ENCODE measurements at regions of chr6 and their contacts with region 1.

Region 1: GRCh38 chr6:116969211-116969863 is 92.3 kb downstream of the RFX6 start:
- DNase-seq: peak in 1 of 2 experiments; percentile 60
- H3K4me3 ChIP-seq: no peak overlapping the region
- H3K4me3 Mint-ChIP-seq: no peak overlapping the region
- H3K27ac Mint-ChIP-seq: no peak overlapping the region
- H3K4me1 ChIP-seq: no peaks in the 10 kb centered on the region
- H3K4me1 Mint-ChIP-seq: no peaks in the 10 kb centered on the region
- H3K27me3 ChIP-seq: 0 out of 2 replicates have a peak, but pooled peaks cover 1% of the 10 kb centered on the region
- H3K27me3 Mint-ChIP-seq: no peaks in the 10 kb centered on the region
- CTCF ChIP-seq: peak; percentile 71 to 76

Region 2: DNA sequence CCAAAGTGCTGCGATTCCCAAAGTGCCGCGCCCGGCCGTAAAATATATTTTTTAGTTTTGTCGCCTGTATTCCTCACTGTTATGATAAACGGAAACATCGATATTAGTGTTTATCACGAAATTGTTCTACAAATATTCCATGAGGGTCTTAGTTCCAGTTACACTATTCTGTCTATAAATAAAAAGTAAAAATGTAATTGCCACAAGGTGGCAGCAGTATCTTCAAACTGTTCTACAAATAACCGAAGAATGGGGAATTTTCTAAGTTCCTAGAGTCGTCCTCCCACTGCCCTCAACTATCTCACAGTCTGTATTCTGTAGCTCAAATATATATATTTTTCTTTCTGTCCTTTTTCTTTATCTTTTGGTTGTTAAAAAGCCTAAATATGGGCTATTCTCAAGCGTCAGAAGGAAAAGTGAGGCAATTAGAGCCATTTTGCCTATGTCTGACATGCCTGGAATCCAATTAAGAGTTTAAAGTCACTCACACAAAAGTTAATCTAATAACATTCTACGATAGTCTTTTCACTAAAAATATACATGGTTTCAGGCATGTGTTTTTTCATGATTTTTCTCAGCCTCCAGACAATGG is 189.7 kb before region 1 on chr6:
- CTCF ChIA-PET with region 1: no interaction called
- POLR2A ChIA-PET with region 1: no interaction called
- intact Hi-C with region 1: loop called (anchors 1 kb)
- DNase-seq: peak in 1 of 2 experiments; percentile 48
- H3K4me3 ChIP-seq: no peak overlapping the region
- H3K4me3 Mint-ChIP-seq: no peak overlapping the region
- H3K27ac Mint-ChIP-seq: no peak overlapping the region
- H3K4me1 ChIP-seq: no peaks in the 10 kb centered on the region
- H3K4me1 Mint-ChIP-seq: peaks cover 12% of the 10 kb centered on the region
- H3K27me3 ChIP-seq: no peaks in the 10 kb centered on the region
- H3K27me3 Mint-ChIP-seq: no peaks in the 10 kb centered on the region
- CTCF ChIP-seq: peak; percentile 23 to 65

Region 3: DNA sequence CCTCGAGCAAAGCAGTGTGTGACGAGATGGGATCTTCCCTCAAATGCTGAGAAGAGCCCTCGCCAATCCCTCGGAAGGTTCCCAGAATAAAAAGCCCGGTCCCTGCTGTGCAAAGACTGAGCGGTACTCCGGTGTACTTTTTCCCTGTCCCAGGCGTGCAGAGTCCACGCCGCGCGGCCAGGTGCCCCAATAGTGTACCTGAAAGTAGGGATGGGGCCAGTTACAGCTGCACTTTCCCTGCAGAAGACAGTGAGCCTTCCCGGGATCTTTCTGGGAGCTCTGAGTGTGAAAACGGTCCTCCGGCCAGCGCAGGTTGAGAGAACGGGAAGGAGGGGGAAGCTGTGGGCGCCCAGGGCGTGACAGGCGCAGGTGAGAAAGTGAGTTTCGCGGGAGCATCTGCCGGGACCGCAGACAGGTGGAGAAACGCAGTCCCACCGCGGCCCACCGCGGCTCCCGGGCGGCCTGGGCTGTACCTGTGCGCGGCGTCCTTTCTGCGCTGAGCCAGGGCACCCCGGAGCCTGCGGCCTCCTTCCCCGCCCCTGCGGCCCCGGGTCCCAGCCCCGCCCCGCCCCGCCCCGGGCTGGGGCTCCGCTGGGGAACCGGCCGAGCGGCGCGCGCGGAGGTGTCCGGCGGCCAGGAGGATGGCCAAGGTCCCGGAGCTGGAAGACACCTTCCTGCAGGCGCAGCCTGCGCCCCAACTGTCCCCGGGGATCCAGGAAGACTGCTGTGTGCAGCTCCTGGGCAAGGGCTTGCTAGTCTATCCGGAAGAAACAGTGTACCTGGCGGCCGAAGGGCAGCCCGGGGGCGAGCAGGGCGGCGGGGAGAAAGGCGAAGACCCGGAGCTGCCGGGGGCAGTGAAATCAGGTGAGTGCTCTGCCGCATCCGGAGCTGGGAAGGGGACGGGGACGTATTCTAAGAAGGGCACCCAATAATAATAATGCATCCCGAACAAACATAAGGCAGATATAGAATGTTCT is 92.4 kb before region 1 on chr6 and contains the start of gene RFX6:
- CTCF ChIA-PET with region 1: interaction called, 13 read pairs
- POLR2A ChIA-PET with region 1: no interaction called
- intact Hi-C with region 1: loop called (anchors 1 kb)
- DNase-seq: peak; percentile 38 to 51
- H3K4me3 ChIP-seq: peak within 1 kb of the TSS; percentile 53
- H3K4me3 Mint-ChIP-seq: peak within 1 kb of the TSS; percentile 88
- H3K27ac Mint-ChIP-seq: no peak within 1 kb of the TSS
- H3K4me1 ChIP-seq: peaks cover 4% of the 10 kb centered on the region; the same call in 1 of the 2 replicates
- H3K4me1 Mint-ChIP-seq: no peaks in the 10 kb centered on the region
- H3K27me3 ChIP-seq: peaks cover 1% of the 10 kb centered on the region
- H3K27me3 Mint-ChIP-seq: peaks cover 3% of the 10 kb centered on the region
- CTCF ChIP-seq: no peak
- total RNA-seq, gene RFX6: 1.3 and 1.5 TPM in 2 replicates

Region 4: GRCh38 chr6:116902629-116903028 is 66.7 kb before region 1 on chr6:
- CTCF ChIA-PET with region 1: no interaction called
- POLR2A ChIA-PET with region 1: no interaction called
- intact Hi-C with region 1: loop called (anchors 1 kb)
- DNase-seq: peak in 1 of 2 experiments; percentile 21
- H3K4me3 ChIP-seq: no peak overlapping the region
- H3K4me3 Mint-ChIP-seq: no peak overlapping the region
- H3K27ac Mint-ChIP-seq: no peak overlapping the region
- H3K4me1 ChIP-seq: peaks cover 10% of the 10 kb centered on the region
- H3K4me1 Mint-ChIP-seq: peaks cover 14% of the 10 kb centered on the region
- H3K27me3 ChIP-seq: no peaks in the 10 kb centered on the region
- H3K27me3 Mint-ChIP-seq: no peaks in the 10 kb centered on the region
- CTCF ChIP-seq: no peak

Region 5: DNA sequence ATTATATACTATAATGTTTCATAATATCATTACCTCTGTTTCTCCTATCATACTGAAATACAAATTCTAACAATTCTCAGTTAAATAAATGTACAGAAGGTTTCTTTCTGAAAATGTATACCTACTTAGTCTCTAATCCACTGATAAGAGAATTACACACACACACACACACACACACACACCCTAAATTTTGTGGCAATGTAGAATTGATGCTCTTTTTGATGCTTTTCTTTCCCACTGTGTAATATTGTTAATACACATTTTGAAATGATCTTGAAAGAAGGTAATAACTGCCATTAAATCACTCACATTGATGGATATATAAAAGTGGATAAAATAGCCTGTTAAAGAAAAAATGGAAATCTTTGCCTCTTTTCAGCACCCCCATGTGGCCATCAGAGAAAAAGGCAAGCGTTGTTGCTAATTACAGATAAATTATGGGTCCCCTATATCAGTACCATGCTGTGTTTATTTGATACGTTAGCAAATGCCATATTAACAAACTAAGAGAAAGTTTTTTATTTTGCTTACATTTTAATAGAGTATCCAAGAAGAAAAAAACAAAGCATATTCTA is 219.4 kb after region 1 on chr6:
- CTCF ChIA-PET with region 1: no interaction called
- POLR2A ChIA-PET with region 1: no interaction called
- intact Hi-C with region 1: loop called (anchors 1 kb)
- DNase-seq: peak in 1 of 2 experiments; percentile 6
- H3K4me3 ChIP-seq: no peak overlapping the region
- H3K4me3 Mint-ChIP-seq: no peak overlapping the region
- H3K27ac Mint-ChIP-seq: no peak overlapping the region
- H3K4me1 ChIP-seq: no peaks in the 10 kb centered on the region
- H3K4me1 Mint-ChIP-seq: no peaks in the 10 kb centered on the region
- H3K27me3 ChIP-seq: no peaks in the 10 kb centered on the region
- H3K27me3 Mint-ChIP-seq: no peaks in the 10 kb centered on the region
- CTCF ChIP-seq: peak; percentile 50 to 60

Region 6: DNA sequence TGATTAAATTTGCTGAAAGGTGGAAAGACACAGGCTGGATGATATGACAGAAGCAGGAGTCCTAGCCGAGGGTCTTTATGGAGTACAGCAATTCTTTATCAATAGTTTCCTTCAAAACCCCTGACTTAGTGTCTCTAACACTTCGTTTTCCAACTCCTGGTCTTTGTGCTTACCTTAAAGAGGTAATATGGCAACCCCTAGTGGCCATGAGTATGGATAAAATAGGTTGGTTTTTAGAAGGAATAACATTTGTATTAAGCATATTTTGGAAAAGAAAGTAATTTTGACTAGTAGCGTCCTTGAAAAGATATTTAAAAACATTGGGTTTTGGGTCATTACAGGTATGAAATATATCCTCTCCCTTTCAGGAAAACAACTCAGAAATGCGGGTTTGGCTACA is 347.9 kb after region 1 on chr6:
- CTCF ChIA-PET with region 1: no interaction called
- POLR2A ChIA-PET with region 1: no interaction called
- intact Hi-C with region 1: loop called (anchors 1 kb)
- DNase-seq: peak in 1 of 2 experiments; percentile 6
- H3K4me3 ChIP-seq: no peak overlapping the region
- H3K4me3 Mint-ChIP-seq: no peak overlapping the region
- H3K27ac Mint-ChIP-seq: no peak overlapping the region
- H3K4me1 ChIP-seq: no peaks in the 10 kb centered on the region
- H3K4me1 Mint-ChIP-seq: no peaks in the 10 kb centered on the region
- H3K27me3 ChIP-seq: no peaks in the 10 kb centered on the region
- H3K27me3 Mint-ChIP-seq: peaks cover 5% of the 10 kb centered on the region
- CTCF ChIP-seq: peak; percentile 42 to 72